CD4-positive, alpha-beta memory T cell (primary cell): ENCODE measurements at regions of chr6 and their contacts with region 1.

Region 1: GRCh38 chr6:53492860-53493634 is 51.9 kb downstream of the GCLC start:
- DNase-seq: peak in 4 of 5 donors; percentile 52 to 55 (median 53)
- H3K4me3 ChIP-seq: no peak overlapping the region
- H3K4me3 Mint-ChIP-seq: no peak overlapping the region
- H3K27ac ChIP-seq: no peak overlapping the region
- H3K27ac Mint-ChIP-seq: peak overlapping the region in 1 of 7 donors; percentile 13
- H3K4me1 ChIP-seq: no peaks in the 10 kb centered on the region
- H3K4me1 Mint-ChIP-seq: peaks cover 0 to 3% (median 1%) of the 10 kb centered on the region in 4 donors
- H3K27me3 ChIP-seq: no peaks in the 10 kb centered on the region
- H3K27me3 Mint-ChIP-seq: peaks cover 5 to 6% of the 10 kb centered on the region in 2 donors

Region 2: GRCh38 chr6:53506872-53507271 is 13.8 kb after region 1 on chr6:
- CTCF ChIA-PET with region 1: interaction called, 15 read pairs
- POLR2A ChIA-PET with region 1: no interaction called
- intact Hi-C with region 1: no loop called
- DNase-seq: no peak
- H3K4me3 ChIP-seq: no peak overlapping the region
- H3K4me3 Mint-ChIP-seq: no peak overlapping the region
- H3K27ac ChIP-seq: no peak overlapping the region
- H3K27ac Mint-ChIP-seq: peak overlapping the region in 1 of 7 donors; percentile 10
- H3K4me1 ChIP-seq: no peaks in the 10 kb centered on the region
- H3K4me1 Mint-ChIP-seq: no peaks in the 10 kb centered on the region
- H3K27me3 ChIP-seq: no peaks in the 10 kb centered on the region
- H3K27me3 Mint-ChIP-seq: no peaks in the 10 kb centered on the region

Region 3: GRCh38 chr6:53544470-53545308 is 51.6 kb after region 1 on chr6 and contains the start of gene GCLC:
- CTCF ChIA-PET with region 1: interaction called, 10 read pairs
- POLR2A ChIA-PET with region 1: no interaction called
- intact Hi-C with region 1: loop called (anchors 5 kb)
- DNase-seq: peak; percentile 82 to 85 (median 84)
- H3K4me3 ChIP-seq: peak within 1 kb of the TSS; percentile 61 to 63
- H3K4me3 Mint-ChIP-seq: peak within 1 kb of the TSS; percentile 95 to 99 (median 98)
- H3K27ac ChIP-seq: peak within 1 kb of the TSS; percentile 59
- H3K27ac Mint-ChIP-seq: peak within 1 kb of the TSS; percentile 79 to 96 (median 94)
- H3K4me1 ChIP-seq: peaks cover 51% of the 10 kb centered on the region
- H3K4me1 Mint-ChIP-seq: peaks cover 47 to 73% (median 59%) of the 10 kb centered on the region in 4 donors
- H3K27me3 ChIP-seq: no peaks in the 10 kb centered on the region
- H3K27me3 Mint-ChIP-seq: no peaks in the 10 kb centered on the region
- total RNA-seq, gene GCLC: 39.6 to 40.9 TPM

Region 4: GRCh38 chr6:53664623-53665022 is 171.6 kb after region 1 on chr6:
- CTCF ChIA-PET with region 1: interaction called, 11 read pairs
- POLR2A ChIA-PET with region 1: no interaction called
- intact Hi-C with region 1: no loop called
- DNase-seq: no peak
- H3K4me3 ChIP-seq: no peak overlapping the region
- H3K4me3 Mint-ChIP-seq: no peak overlapping the region
- H3K27ac ChIP-seq: no peak overlapping the region
- H3K27ac Mint-ChIP-seq: no peak overlapping the region
- H3K4me1 ChIP-seq: no peaks in the 10 kb centered on the region
- H3K4me1 Mint-ChIP-seq: no peaks in the 10 kb centered on the region
- H3K27me3 ChIP-seq: peaks cover 5% of the 10 kb centered on the region
- H3K27me3 Mint-ChIP-seq: peaks cover 15 to 34% of the 10 kb centered on the region in 2 donors

Region 5: DNA sequence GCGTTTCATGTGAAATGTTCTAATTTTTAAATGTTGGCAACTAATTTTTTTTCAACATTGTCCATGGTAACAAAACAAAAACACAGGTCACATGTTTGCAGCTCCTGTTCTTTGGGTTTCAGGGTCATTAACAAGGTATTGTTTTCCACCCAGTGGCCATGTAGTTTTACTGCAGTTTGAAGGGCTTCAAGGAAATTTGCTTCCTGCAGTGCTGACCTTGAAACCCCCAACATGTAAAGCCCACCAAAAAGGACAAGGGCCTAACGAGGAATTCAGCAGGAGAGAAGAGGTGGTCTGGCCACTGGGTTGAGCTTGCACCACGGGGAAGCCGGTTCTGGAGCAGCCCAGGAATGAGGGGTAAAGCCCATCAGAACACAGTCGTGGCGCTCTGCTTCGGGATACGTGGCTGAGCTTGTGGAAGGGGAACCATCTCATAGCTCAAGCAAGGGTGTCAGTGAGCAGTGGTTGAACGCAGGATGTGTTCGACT is 186.4 kb after region 1 on chr6:
- CTCF ChIA-PET with region 1: interaction called, 8 read pairs
- POLR2A ChIA-PET with region 1: no interaction called
- intact Hi-C with region 1: loop called (anchors 1 kb)
- DNase-seq: peak; percentile 28 to 40 (median 36)
- H3K4me3 ChIP-seq: no peak overlapping the region
- H3K4me3 Mint-ChIP-seq: no peak overlapping the region
- H3K27ac ChIP-seq: no peak overlapping the region
- H3K27ac Mint-ChIP-seq: peak overlapping the region in 2 of 7 donors; percentile 14 to 64
- H3K4me1 ChIP-seq: no peaks in the 10 kb centered on the region
- H3K4me1 Mint-ChIP-seq: peaks cover 0 to 2% (median 0%) of the 10 kb centered on the region in 4 donors
- H3K27me3 ChIP-seq: no peaks in the 10 kb centered on the region
- H3K27me3 Mint-ChIP-seq: peaks cover 0 to 4% of the 10 kb centered on the region in 2 donors